ENCODE measurements at regions of chr18 and their contacts with region 1.

Region 1: DNA sequence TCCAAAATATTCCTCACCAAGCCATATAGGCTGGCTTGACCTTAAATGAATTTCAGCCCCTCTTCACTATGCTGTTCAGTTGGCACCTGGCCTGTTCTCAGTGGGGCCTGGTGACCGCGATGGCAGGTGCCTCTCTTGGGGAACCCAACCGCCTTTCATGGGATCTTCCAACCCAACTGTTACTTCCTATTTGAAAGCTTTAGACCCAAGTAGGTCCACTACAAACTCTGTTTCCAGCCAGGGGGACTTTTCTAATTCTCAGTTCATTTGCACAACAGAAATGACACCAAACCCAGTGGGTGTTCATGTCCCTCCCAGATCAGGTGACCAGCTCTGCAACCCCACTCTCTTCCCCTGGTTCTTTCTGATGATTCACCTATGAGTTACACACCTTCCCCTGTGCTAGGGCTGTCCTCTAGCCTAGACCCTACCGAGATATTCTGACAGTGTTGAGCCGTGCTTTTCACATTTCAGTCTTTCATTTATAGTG is 35.6 kb upstream of the NDUFV2 start:
- DNase-seq: no peak
- ATAC-seq: no peak

Region 2: DNA sequence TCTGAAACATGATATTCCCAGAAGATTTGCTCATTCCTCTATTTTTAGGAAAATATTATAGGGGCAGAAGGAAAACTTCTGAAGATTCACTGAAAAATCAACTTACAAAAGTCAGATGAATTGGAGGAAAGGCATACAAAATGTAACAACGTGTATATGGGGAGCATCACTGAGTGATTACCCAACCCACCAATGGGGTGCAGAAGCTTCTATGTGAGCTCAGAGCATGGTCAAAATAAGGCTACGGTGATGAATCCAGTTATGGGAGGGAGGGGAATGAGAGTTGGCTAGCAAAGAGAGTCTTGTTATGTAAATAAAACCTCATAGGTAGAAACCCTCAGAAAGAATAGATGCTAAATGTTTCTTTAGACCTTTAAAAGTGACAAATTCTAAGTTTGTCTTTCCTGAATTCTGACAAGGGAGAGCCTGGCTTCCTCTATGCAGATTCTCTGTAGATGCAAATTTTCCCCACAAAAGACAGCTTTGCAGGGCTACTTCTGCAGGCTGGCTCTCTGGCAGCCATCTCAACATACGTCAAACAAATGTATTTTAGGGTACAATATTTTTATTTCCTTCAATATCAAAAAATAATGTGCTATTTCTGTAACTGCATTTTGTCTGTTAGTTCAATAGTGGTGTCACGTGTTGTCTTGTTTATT is 135.7 kb before region 1 on chr18:
- intact Hi-C with region 1: no loop called
- DNase-seq: no peak
- ATAC-seq: no peak

Region 3: GRCh38 chr18:9147440-9148202 is 80.8 kb after region 1 on chr18:
- intact Hi-C with region 1: loop called (anchors 2 kb)
- DNase-seq: no peak
- ATAC-seq: peak; percentile 81

Region 4: DNA sequence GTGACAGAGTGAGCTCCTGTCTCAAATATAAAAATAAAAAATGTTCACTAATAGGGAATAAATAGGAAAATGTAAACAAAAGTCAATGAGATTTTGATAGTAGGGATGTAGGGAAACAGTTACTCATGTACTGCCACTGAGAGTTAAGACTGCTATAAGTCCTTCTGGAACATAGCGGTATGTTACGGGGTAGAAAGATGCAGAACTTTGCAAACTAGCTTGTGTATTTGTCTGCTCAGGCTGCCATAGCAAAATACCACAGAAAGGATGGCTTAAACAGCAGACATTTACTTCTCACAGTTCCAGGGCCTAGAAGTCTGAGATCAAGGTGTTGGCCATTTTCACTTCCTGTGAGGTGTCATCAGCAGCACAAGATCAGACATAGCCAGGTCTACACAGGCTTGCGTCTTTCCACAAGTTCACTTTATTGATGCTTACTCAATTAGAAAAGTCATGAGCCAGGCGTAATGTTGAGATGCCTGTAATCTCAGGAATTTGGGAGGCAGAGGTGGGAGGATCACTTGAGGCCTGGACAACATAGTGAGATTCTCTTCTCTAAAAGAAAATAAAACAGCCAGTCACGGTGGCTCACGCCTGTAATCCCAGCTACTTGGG is 827.7 kb after region 1 on chr18:
- intact Hi-C with region 1: no loop called
- DNase-seq: no peak
- ATAC-seq: no peak